Prostate gland (tissue), 2 donors: ENCODE measurements at regions of chr4 and their contacts with region 1.

Region 1: GRCh38 chr4:8403173-8403753 is 37.3 kb downstream of the ACOX3 start:
- DNase-seq: peak; percentile 73
- H3K4me3 ChIP-seq: no peak overlapping the region
- H3K27ac ChIP-seq: peak overlapping the region; percentile 18 to 21
- H3K4me1 ChIP-seq: peaks cover 3% of the 10 kb centered on the region
- H3K27me3 ChIP-seq: no peaks in the 10 kb centered on the region
- CTCF ChIP-seq: peak; percentile 80 to 96 (median 93)
- POLR2A ChIP-seq: no peak

Region 2: GRCh38 chr4:8070736-8071718 is 332.2 kb before region 1 on chr4:
- intact Hi-C with region 1: no loop called
- DNase-seq: no peak
- H3K4me3 ChIP-seq: no peak overlapping the region
- H3K27ac ChIP-seq: no peak overlapping the region
- H3K4me1 ChIP-seq: no peaks in the 10 kb centered on the region
- H3K27me3 ChIP-seq: peaks cover 4% of the 10 kb centered on the region
- CTCF ChIP-seq: no peak
- POLR2A ChIP-seq: no peak

Region 3: GRCh38 chr4:8176547-8177399 is 226.5 kb before region 1 on chr4:
- intact Hi-C with region 1: loop called (anchors 10 kb)
- DNase-seq: no peak
- H3K4me3 ChIP-seq: no peak overlapping the region
- H3K27ac ChIP-seq: no peak overlapping the region
- H3K4me1 ChIP-seq: no peaks in the 10 kb centered on the region
- H3K27me3 ChIP-seq: no peaks in the 10 kb centered on the region
- CTCF ChIP-seq: peak; percentile 40 to 91 (median 71)
- POLR2A ChIP-seq: no peak

Region 4: GRCh38 chr4:8241895-8242696 is 161.2 kb before region 1 on chr4:
- intact Hi-C with region 1: loop called (anchors 1 kb)
- DNase-seq: peak; percentile 70
- H3K4me3 ChIP-seq: no peak overlapping the region
- H3K27ac ChIP-seq: no peak overlapping the region
- H3K4me1 ChIP-seq: no peaks in the 10 kb centered on the region
- H3K27me3 ChIP-seq: no peaks in the 10 kb centered on the region
- CTCF ChIP-seq: peak; percentile 96 to 99 (median 97)
- POLR2A ChIP-seq: no peak

Region 5: DNA sequence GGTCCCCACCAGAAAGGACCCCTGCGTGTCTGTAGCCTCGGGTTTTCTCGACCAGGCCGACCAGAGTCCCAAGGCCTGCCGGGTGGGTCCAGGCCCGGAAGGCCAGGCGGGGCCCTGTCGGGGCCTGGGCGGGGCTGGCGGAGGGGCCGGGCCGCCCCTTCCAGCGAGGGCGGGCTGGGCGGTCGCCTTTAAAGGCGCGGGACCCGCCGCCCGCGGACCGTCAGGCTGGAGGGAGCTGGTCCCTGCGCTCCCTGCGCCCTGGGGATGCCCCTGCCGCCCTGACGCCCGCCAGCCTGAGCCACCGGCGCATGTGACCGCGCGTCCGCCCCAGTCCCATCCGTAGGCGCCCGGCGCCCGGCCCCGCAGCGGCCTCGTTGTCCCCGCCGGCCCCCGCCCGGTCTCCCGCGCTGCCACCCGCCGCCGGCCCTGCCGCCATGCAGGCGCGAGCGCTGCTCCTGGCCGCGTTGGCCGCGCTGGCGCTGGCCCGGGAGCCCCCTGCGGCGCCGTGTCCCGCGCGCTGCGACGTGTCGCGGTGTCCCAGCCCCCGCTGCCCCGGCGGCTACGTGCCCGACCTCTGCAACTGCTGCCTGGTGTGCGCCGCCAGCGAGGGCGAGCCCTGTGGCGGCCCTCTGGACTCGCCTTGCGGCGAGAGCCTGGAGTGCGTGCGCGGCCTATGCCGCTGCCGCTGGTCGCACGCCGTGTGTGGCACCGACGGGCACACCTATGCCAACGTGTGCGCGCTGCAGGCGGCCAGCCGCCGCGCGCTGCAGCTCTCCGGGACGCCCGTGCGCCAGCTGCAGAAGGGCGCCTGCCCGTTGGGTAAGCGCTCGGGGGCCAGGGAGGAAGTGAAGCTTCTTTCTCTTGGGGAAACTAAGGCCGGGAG is 133.5 kb before region 1 on chr4 and contains the start of gene HTRA3:
- intact Hi-C with region 1: loop called (anchors 2 kb)
- DNase-seq: no peak
- H3K4me3 ChIP-seq: peak within 1 kb of the TSS; percentile 32 to 33
- H3K27ac ChIP-seq: peak within 1 kb of the TSS in 1 of 2 donors; percentile 15
- H3K4me1 ChIP-seq: peaks cover 5% of the 10 kb centered on the region
- H3K27me3 ChIP-seq: no peaks in the 10 kb centered on the region
- CTCF ChIP-seq: peak in 1 of 4 experiments; percentile 11
- POLR2A ChIP-seq: no peak
- total RNA-seq, gene HTRA3: 6.0 to 18.9 TPM

Region 6: GRCh38 chr4:8478801-8479744 is 75.8 kb after region 1 on chr4:
- intact Hi-C with region 1: no loop called
- DNase-seq: no peak
- H3K4me3 ChIP-seq: no peak overlapping the region
- H3K27ac ChIP-seq: no peak overlapping the region
- H3K4me1 ChIP-seq: no peaks in the 10 kb centered on the region
- H3K27me3 ChIP-seq: no peaks in the 10 kb centered on the region
- CTCF ChIP-seq: no peak
- POLR2A ChIP-seq: no peak

Region 7: DNA sequence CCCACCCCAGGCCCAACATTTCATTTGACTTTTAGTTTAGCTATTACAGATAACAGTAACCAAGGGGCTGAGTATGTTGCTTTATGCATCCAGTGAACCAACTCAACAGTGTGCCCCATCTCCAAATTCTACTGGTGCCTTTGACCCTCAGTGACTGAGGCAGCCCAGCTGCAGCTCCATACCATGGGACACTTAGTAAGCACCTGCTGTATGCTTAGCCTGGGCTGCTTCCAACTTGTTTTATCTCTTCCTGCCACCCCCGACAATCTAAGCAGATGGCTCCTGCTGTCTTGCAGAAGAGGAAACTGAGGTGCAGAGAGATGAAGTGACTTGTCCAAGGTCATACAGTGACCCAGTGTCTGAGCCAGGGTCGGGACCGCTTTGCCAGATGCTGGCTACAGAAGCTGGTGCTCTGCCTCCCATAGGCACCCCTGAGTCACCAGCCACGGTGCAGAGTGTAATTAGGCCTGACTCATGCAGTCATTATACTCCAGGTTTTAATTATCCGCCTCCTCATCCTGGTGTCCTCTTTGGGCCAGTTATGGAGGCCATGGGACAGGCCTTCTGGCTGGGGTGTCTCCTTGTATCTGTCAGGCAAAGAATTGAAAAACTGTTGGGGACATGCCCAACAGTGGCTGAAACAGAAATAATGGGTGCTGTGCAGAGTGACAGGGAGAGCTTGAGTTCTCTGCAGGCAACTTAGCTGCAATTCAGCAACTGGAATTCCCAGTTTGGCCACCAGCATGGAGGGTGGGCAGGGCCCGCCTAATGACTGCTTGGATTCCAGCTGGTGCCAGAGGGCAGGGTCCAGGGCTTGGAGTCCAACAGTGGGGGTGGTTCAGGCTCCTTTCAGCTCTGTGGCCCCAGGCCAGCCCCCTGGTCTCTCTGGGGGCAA is 168.7 kb after region 1 on chr4:
- intact Hi-C with region 1: no loop called
- DNase-seq: no peak
- H3K4me3 ChIP-seq: no peak overlapping the region
- H3K27ac ChIP-seq: no peak overlapping the region
- H3K4me1 ChIP-seq: no peaks in the 10 kb centered on the region
- H3K27me3 ChIP-seq: no peaks in the 10 kb centered on the region
- CTCF ChIP-seq: no peak
- POLR2A ChIP-seq: no peak

Region 8: GRCh38 chr4:8651661-8652180 is 248.5 kb after region 1 on chr4:
- intact Hi-C with region 1: no loop called
- DNase-seq: no peak
- H3K4me3 ChIP-seq: no peak overlapping the region
- H3K27ac ChIP-seq: no peak overlapping the region
- H3K4me1 ChIP-seq: no peaks in the 10 kb centered on the region
- H3K27me3 ChIP-seq: peaks cover 5% of the 10 kb centered on the region
- CTCF ChIP-seq: no peak
- POLR2A ChIP-seq: no peak